CD8-positive, alpha-beta T cell (primary cell): ENCODE measurements at regions of chr5 and their contacts with region 1.

Region 1: GRCh38 chr5:100840384-100840783 is 62.7 kb downstream of the ST8SIA4 start:
- DNase-seq: peak in 2 of 9 experiments; percentile 59 to 71
- ATAC-seq: peak; percentile 60
- H3K4me3 ChIP-seq: no peak overlapping the region
- H3K4me3 Mint-ChIP-seq: no peak overlapping the region
- H3K27ac ChIP-seq: no peak overlapping the region
- H3K27ac Mint-ChIP-seq: no peak overlapping the region
- H3K4me1 ChIP-seq: peaks cover 4% of the 10 kb centered on the region
- H3K4me1 Mint-ChIP-seq: peaks cover 66% of the 10 kb centered on the region
- H3K27me3 ChIP-seq: no peaks in the 10 kb centered on the region
- H3K27me3 Mint-ChIP-seq: no peaks in the 10 kb centered on the region
- CTCF ChIP-seq: no peak

Region 2: DNA sequence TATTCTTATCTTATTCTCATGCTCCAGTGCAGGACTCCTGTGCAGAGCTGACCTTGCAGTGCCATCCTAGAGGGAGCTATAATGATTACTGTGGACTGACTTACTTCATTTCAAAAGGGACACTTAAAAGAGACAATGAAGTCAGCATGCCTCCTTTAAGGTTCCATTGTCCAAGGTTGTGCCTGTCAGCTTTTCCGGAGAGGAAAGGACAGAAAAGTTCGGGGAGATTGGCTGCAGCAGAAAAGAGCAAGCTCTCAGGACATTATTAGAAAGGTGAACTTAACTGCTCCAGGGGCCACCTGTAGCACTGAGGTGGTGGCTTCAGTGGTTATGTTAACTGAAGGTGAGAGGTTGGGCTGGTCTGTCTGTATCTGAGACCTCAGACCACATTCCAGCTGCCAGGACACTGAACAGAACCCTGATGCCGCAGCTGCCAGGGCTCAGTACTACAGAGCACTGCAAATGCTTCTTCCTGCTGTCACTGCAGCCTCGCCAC is 50.2 kb before region 1 on chr5:
- CTCF ChIA-PET with region 1: no interaction called
- POLR2A ChIA-PET with region 1: no interaction called
- intact Hi-C with region 1: no loop called
- DNase-seq: peak in 2 of 9 experiments; percentile 7 to 15
- ATAC-seq: no peak
- H3K4me3 ChIP-seq: no peak overlapping the region
- H3K4me3 Mint-ChIP-seq: no peak overlapping the region
- H3K27ac ChIP-seq: no peak overlapping the region
- H3K27ac Mint-ChIP-seq: no peak overlapping the region
- H3K4me1 ChIP-seq: no peaks in the 10 kb centered on the region
- H3K4me1 Mint-ChIP-seq: peaks cover 8% of the 10 kb centered on the region
- H3K27me3 ChIP-seq: no peaks in the 10 kb centered on the region
- H3K27me3 Mint-ChIP-seq: no peaks in the 10 kb centered on the region
- CTCF ChIP-seq: no peak

Region 3: DNA sequence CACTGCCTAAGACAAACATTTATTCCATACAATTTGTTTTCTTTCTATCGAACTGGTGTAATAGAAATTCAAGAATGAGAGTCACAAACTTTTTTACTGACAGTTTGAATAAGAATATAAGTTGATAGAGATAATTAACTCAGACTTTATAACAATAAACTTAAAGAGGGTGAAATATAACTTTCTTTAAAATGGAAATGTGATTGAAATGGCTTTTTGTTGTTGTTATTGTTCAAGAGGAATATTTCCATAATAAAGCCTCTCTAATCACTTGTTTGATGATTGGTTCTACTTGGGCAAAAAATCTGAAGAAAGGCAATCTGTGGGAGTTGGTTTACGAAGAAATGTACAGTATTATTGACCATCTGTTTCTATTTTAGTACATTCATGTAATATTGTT is 16.6 kb before region 1 on chr5:
- CTCF ChIA-PET with region 1: interaction called, 3 read pairs
- POLR2A ChIA-PET with region 1: no interaction called
- intact Hi-C with region 1: loop called in 1 of 2 experiments (anchors 2 kb)
- DNase-seq: no peak
- ATAC-seq: no peak
- H3K4me3 ChIP-seq: no peak overlapping the region
- H3K4me3 Mint-ChIP-seq: no peak overlapping the region
- H3K27ac ChIP-seq: no peak overlapping the region
- H3K27ac Mint-ChIP-seq: no peak overlapping the region
- H3K4me1 ChIP-seq: no peaks in the 10 kb centered on the region
- H3K4me1 Mint-ChIP-seq: peaks cover 50% of the 10 kb centered on the region
- H3K27me3 ChIP-seq: no peaks in the 10 kb centered on the region
- H3K27me3 Mint-ChIP-seq: no peaks in the 10 kb centered on the region
- CTCF ChIP-seq: no peak

Region 4: DNA sequence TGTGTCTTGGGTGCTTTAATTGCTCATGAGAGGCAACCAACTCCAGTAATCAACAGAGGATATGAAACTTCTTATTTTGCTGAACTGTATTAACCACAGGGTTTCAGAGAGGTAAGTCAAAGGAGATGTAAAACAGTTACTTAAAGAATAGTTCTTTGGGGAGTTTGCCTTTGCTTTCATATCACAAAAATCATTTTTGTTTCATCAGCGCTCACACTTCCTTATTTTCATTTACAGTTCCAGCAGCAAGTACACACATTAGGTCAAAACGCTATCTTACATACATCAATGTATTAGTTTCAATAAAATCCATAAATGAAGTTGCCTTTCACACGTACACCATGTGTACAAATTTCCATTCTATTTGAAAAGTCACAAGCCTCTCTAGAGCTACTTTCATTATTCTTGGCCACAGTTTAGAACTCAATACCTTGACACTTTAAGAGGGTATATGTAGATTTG is 12.6 kb after region 1 on chr5:
- CTCF ChIA-PET with region 1: no interaction called
- POLR2A ChIA-PET with region 1: interaction called, 4 read pairs
- intact Hi-C with region 1: loop called (anchors 2 kb)
- DNase-seq: peak in 1 of 9 experiments; percentile 32
- ATAC-seq: peak; percentile 38
- H3K4me3 ChIP-seq: no peak overlapping the region
- H3K4me3 Mint-ChIP-seq: peak overlapping the region; percentile 36
- H3K27ac ChIP-seq: peak overlapping the region in 1 of 2 experiments; percentile 57
- H3K27ac Mint-ChIP-seq: peak overlapping the region; percentile 76
- H3K4me1 ChIP-seq: peaks cover 8% of the 10 kb centered on the region
- H3K4me1 Mint-ChIP-seq: peaks cover 44% of the 10 kb centered on the region
- H3K27me3 ChIP-seq: no peaks in the 10 kb centered on the region
- H3K27me3 Mint-ChIP-seq: no peaks in the 10 kb centered on the region
- CTCF ChIP-seq: no peak

Region 5: GRCh38 chr5:100890461-100891008 is 50.2 kb after region 1 on chr5:
- CTCF ChIA-PET with region 1: no interaction called
- POLR2A ChIA-PET with region 1: no interaction called
- intact Hi-C with region 1: loop called in 1 of 2 experiments (anchors 2 kb)
- DNase-seq: peak in 1 of 9 experiments; percentile 33
- ATAC-seq: no peak
- H3K4me3 ChIP-seq: no peak overlapping the region
- H3K4me3 Mint-ChIP-seq: peak overlapping the region; percentile 76
- H3K27ac ChIP-seq: peak overlapping the region in 1 of 2 experiments; percentile 74
- H3K27ac Mint-ChIP-seq: peak overlapping the region; percentile 84
- H3K4me1 ChIP-seq: peaks cover 35% of the 10 kb centered on the region
- H3K4me1 Mint-ChIP-seq: peaks cover 69% of the 10 kb centered on the region
- H3K27me3 ChIP-seq: no peaks in the 10 kb centered on the region
- H3K27me3 Mint-ChIP-seq: no peaks in the 10 kb centered on the region
- CTCF ChIP-seq: no peak